Breast epithelium (tissue), 4 donors: ENCODE measurements at regions of chr2 and their contacts with region 1.

Region 1: GRCh38 chr2:168912901-168913369 is 11.8 kb downstream of the G6PC2 start:
- DNase-seq: peak in 1 of 2 donors; percentile 33
- H3K4me3 ChIP-seq: peak overlapping the region in 2 of 3 donors; percentile 32 to 62
- H3K27ac ChIP-seq: peak overlapping the region; percentile 15 to 72
- H3K4me1 ChIP-seq: no peaks in the 10 kb centered on the region
- H3K27me3 ChIP-seq: no peaks in the 10 kb centered on the region
- CTCF ChIP-seq: no peak
- POLR2A ChIP-seq: no peak

Region 2: DNA sequence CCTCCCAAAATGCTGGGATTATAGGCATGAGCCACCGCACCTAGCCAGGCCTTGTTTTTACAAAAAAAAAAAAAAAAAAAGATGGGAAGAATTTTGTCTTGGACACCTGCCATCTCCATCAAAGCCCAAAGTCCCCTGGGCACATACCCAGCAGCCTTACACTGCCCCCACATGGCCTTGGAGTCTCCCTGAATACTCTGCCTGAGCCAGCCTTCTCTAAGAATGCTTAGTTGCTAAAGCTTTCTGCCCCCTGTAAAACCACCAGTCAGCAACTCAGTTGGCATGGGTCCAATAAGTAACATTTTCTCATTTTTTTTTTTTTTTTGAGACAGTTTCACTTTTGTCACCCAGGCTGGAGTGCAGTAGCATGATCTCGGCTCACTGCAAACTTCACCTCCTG is 63.3 kb before region 1 on chr2:
- intact Hi-C with region 1: loop called (anchors 2 kb)
- DNase-seq: no peak
- H3K4me3 ChIP-seq: no peak overlapping the region
- H3K27ac ChIP-seq: no peak overlapping the region
- H3K4me1 ChIP-seq: no peaks in the 10 kb centered on the region
- H3K27me3 ChIP-seq: no peaks in the 10 kb centered on the region
- CTCF ChIP-seq: no peak
- POLR2A ChIP-seq: no peak

Region 3: DNA sequence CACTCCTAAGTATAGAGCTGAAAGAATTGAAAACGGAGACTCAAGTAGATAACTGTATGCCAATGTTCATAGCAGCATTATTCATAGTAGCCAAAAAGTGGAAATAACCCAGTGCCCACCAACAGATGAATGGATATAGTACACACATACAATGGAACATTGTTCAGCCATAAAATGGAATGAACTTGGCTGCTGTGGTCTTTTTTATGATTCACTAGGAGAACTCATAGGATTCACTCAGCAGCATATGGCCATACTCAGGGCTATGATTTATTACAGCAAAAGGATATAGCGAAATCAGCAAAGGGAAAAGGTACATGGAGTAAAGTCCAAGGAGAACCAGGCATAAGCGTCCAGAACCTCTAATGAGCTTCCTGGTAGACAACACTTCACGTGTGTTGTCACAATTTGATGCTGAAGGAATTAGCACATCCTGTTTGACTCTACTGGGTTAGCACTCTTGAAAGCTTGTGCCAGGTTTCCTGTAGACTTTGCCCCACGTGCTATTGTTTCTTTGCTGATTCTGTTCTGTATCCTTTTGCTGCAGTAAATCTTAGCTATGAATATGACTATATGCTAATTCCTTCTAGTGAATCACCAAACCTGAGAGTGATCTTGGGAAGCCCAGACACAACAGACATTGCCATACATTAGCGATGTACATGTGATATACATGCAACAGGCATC is 38.4 kb before region 1 on chr2:
- intact Hi-C with region 1: no loop called
- DNase-seq: no peak
- H3K4me3 ChIP-seq: no peak overlapping the region
- H3K27ac ChIP-seq: no peak overlapping the region
- H3K4me1 ChIP-seq: no peaks in the 10 kb centered on the region
- H3K27me3 ChIP-seq: no peaks in the 10 kb centered on the region
- CTCF ChIP-seq: no peak
- POLR2A ChIP-seq: no peak

Region 4: GRCh38 chr2:168948621-168949212 is 35.8 kb after region 1 on chr2:
- intact Hi-C with region 1: no loop called
- DNase-seq: no peak
- H3K4me3 ChIP-seq: no peak overlapping the region
- H3K27ac ChIP-seq: no peak overlapping the region
- H3K4me1 ChIP-seq: no peaks in the 10 kb centered on the region
- H3K27me3 ChIP-seq: no peaks in the 10 kb centered on the region
- CTCF ChIP-seq: no peak
- POLR2A ChIP-seq: no peak